Activated CD4-positive, alpha-beta memory T cell treated with anti-CD3 and anti-CD28 coated beads for 36 hours (primary cell): ENCODE measurements at regions of chr11 and their contacts with region 1.

Region 1: GRCh38 chr11:65382033-65382807 is at the start of gene SLC25A45:
- DNase-seq: peak; percentile 97
- H3K4me3 Mint-ChIP-seq: peak within 1 kb of the TSS; percentile 85
- H3K27ac Mint-ChIP-seq: peak within 1 kb of the TSS; percentile 97
- H3K4me1 Mint-ChIP-seq: peaks cover 41% of the 10 kb centered on the region
- H3K27me3 Mint-ChIP-seq: no peaks in the 10 kb centered on the region
- total RNA-seq, gene SLC25A45: 14.4 to 16.1 TPM

Region 2: DNA sequence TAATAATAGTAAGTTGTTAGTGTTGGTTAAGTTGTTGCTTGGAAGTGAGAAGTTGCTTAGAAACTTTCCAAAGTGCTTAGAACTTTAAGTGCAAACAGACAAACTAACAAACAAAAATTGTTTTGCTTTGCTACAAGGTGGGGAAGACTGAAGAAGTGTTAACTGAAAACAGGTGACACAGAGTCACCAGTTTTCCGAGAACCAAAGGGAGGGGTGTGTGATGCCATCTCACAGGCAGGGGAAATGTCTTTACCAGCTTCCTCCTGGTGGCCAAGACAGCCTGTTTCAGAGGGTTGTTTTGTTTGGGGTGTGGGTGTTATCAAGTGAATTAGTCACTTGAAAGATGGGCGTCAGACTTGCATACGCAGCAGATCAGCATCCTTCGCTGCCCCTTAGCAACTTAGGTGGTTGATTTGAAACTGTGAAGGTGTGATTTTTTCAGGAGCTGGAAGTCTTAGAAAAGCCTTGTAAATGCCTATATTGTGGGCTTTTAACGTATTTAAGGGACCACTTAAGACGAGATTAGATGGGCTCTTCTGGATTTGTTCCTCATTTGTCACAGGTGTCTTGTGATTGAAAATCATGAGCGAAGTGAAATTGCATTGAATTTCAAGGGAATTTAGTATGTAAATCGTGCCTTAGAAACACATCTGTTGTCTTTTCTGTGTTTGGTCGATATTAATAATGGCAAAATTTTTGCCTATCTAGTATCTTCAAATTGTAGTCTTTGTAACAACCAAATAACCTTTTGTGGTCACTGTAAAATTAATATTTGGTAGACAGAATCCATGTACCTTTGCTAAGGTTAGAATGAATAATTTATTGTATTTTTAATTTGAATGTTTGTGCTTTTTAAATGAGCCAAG is 43.1 kb after region 1 on chr11:
- CTCF ChIA-PET with region 1: interaction called, 3 read pairs
- POLR2A ChIA-PET with region 1: interaction called, 22 read pairs
- intact Hi-C with region 1: loop called (anchors 1 kb)
- DNase-seq: peak; percentile 91
- H3K4me3 Mint-ChIP-seq: peak overlapping the region; percentile 97
- H3K27ac Mint-ChIP-seq: peak overlapping the region; percentile 100
- H3K4me1 Mint-ChIP-seq: peaks cover 56% of the 10 kb centered on the region
- H3K27me3 Mint-ChIP-seq: peaks cover 24% of the 10 kb centered on the region

Region 3: DNA sequence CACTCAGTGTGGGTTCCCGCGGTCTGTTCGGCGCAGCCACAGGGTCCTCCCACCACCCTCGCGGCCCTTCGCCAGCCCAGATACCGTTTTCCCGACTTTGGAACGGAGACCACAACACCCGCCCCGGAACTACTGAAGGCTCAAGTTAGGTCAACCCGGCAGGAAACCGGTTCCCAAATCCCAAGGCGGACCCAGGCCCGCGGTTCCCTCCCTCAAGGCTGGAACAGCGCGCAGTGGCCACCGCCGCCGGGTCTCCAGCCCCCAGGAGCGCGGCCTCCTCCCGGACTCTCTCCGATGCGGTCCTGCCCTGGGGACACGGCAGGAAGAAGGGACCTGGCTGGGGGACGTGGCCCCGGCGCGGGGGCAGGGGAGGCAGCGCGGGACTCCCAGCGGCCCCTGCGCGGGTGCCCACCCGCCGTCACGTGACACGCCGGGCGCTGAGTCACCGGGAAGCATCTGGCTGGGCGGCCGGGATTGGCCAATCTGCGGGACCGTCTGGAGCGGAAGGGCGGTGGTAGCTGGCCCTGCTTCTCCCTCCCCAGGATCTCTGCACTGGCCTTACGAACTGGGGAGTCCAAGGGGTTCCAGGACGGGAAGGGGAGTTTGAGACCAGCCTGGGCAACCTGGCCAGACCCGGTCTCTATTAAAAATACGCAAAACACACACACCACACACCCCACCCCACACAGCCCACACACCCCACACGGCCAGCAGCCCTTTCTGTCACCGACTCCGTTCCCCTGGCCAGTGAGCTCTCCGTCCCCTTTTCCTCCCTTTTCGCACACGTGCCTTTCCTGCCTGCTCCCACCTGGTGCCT is 95.1 kb after region 1 on chr11:
- CTCF ChIA-PET with region 1: interaction called, 5 read pairs
- POLR2A ChIA-PET with region 1: interaction called, 3 read pairs
- intact Hi-C with region 1: loop called (anchors 1 kb)
- DNase-seq: peak; percentile 96
- H3K4me3 Mint-ChIP-seq: peak overlapping the region; percentile 91
- H3K27ac Mint-ChIP-seq: peak overlapping the region; percentile 95
- H3K4me1 Mint-ChIP-seq: peaks cover 19% of the 10 kb centered on the region
- H3K27me3 Mint-ChIP-seq: no peaks in the 10 kb centered on the region

Region 4: DNA sequence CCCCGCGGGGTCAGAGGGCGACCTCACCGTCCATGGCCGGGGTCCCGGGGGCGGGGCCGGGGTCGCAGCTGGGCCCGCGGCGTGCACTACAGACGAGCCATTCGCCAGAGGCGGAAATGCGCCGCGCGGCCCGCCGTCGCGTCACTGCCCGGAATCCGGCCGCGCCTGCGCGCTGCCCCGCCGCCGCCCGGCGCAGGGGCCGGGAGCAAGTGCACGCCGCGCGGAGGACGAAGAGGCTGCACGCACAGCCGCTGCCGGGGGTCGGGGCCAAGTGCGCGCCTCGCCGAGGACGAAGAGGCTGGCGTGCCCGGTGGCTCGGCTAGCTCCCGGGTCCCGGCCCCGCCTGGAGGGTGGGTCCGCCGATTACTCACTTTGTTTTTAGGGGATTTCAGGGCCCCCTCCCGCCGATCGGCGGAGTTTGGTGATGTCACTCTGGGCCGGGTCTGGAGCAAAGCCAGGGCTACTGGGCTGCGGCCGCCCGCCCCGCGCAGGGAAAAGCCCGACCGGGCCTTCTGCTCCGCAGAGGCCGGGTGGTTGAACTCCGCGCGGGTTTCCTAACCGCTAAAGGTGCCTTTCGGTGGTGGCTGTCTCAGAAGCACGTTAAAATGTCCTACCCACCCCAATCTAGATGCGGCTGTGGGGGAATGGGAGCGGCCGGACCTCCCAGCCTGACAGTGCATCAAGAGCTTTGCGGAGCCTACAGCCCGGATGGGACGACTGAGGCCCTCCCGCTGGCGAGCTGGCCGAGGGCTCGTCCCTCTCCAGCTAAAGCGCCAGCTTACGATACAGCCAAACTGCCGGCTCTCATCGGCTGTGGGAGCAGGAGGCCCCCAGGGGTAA is 280.8 kb after region 1 on chr11 and contains the start of gene RELA:
- CTCF ChIA-PET with region 1: no interaction called
- POLR2A ChIA-PET with region 1: no interaction called
- intact Hi-C with region 1: loop called (anchors 2 kb)
- DNase-seq: peak; percentile 95
- H3K4me3 Mint-ChIP-seq: peak within 1 kb of the TSS; percentile 85
- H3K27ac Mint-ChIP-seq: peak within 1 kb of the TSS; percentile 95
- H3K4me1 Mint-ChIP-seq: peaks cover 38% of the 10 kb centered on the region
- H3K27me3 Mint-ChIP-seq: no peaks in the 10 kb centered on the region
- total RNA-seq, gene RELA: 74.9 to 76.5 TPM